Colonic mucosa (tissue), 4 donors: ENCODE measurements at regions of chr7 and their contacts with region 1.

Region 1: GRCh38 chr7:25894902-25895791 is 256.9 kb upstream of the NFE2L3 start:
- DNase-seq: peak; percentile 83
- H3K4me3 ChIP-seq: no peak overlapping the region
- H3K27ac ChIP-seq: no peak overlapping the region
- H3K4me1 ChIP-seq: no peaks in the 10 kb centered on the region
- H3K27me3 ChIP-seq: no peaks in the 10 kb centered on the region
- CTCF ChIP-seq: peak; percentile 64

Region 2: GRCh38 chr7:26061688-26062150 is 166.6 kb after region 1 on chr7:
- intact Hi-C with region 1: loop called (anchors 2 kb)
- DNase-seq: peak; percentile 88
- H3K4me3 ChIP-seq: no peak overlapping the region
- H3K27ac ChIP-seq: no peak overlapping the region
- H3K4me1 ChIP-seq: no peaks in the 10 kb centered on the region
- H3K27me3 ChIP-seq: no peaks in the 10 kb centered on the region
- CTCF ChIP-seq: peak; percentile 72

Region 3: GRCh38 chr7:26675143-26675887 is 780.2 kb after region 1 on chr7:
- intact Hi-C with region 1: loop called (anchors 10 kb)
- DNase-seq: no peak
- H3K4me3 ChIP-seq: no peak overlapping the region
- H3K27ac ChIP-seq: no peak overlapping the region
- H3K4me1 ChIP-seq: no peaks in the 10 kb centered on the region
- H3K27me3 ChIP-seq: no peaks in the 10 kb centered on the region
- CTCF ChIP-seq: no peak